Activated CD8-positive, alpha-beta T cell treated with anti-CD3 and anti-CD28 coated beads, Interleukin-2, amount 10 ng/mL, durations not matched to agents 7 days and 5 days (primary cell): ENCODE measurements at regions of chr13 and their contacts with region 1.

Region 1: GRCh38 chr13:59677966-59678814 is 485.5 kb downstream of the DIAPH3 start:
- DNase-seq: peak; percentile 25
- ATAC-seq: peak; percentile 72
- H3K4me3 Mint-ChIP-seq: no peak overlapping the region
- H3K27ac Mint-ChIP-seq: no peak overlapping the region
- H3K4me1 Mint-ChIP-seq: peaks cover under 1% of the 10 kb centered on the region
- H3K27me3 Mint-ChIP-seq: no peaks in the 10 kb centered on the region

Region 2: GRCh38 chr13:59391696-59392095 is 286.5 kb before region 1 on chr13:
- CTCF ChIA-PET with region 1: interaction called, 51 read pairs
- POLR2A ChIA-PET with region 1: no interaction called
- DNase-seq: peak; percentile 80
- ATAC-seq: peak; percentile 96
- H3K4me3 Mint-ChIP-seq: no peak overlapping the region
- H3K27ac Mint-ChIP-seq: no peak overlapping the region
- H3K4me1 Mint-ChIP-seq: no peaks in the 10 kb centered on the region
- H3K27me3 Mint-ChIP-seq: peaks cover 11% of the 10 kb centered on the region

Region 3: DNA sequence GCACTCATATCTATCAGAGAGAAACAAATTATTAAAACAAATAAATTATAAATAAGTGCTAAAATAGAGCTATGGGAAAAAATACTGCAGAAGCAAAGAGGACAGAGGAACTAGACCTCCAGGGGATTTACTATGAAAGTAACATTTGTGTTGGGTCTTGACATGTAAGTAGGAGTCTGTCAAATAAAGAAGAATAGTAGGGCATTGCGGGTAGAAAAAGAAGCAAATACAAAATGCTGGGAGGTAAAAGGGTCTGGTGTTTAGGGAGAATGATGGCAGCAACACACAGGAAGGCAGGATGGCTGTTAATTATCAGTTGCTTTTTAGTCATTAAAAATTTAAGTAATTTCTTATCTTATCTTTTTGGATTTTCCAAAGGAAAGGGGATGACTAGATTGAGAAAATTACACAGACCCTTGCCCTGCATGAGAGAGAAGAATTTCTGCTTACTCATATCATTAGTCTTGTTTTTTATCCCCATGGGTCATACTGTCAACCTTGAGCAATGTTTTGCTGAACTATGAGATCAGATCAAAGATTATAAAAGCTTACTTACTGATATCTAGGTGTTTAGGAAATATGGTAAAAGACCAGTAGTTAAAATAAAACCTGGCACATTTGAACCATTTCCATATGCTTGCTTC is 12.8 kb after region 1 on chr13:
- CTCF ChIA-PET with region 1: interaction called, 10 read pairs
- POLR2A ChIA-PET with region 1: no interaction called
- DNase-seq: no peak
- ATAC-seq: no peak
- H3K4me3 Mint-ChIP-seq: no peak overlapping the region
- H3K27ac Mint-ChIP-seq: no peak overlapping the region
- H3K4me1 Mint-ChIP-seq: no peaks in the 10 kb centered on the region
- H3K27me3 Mint-ChIP-seq: no peaks in the 10 kb centered on the region

Region 4: DNA sequence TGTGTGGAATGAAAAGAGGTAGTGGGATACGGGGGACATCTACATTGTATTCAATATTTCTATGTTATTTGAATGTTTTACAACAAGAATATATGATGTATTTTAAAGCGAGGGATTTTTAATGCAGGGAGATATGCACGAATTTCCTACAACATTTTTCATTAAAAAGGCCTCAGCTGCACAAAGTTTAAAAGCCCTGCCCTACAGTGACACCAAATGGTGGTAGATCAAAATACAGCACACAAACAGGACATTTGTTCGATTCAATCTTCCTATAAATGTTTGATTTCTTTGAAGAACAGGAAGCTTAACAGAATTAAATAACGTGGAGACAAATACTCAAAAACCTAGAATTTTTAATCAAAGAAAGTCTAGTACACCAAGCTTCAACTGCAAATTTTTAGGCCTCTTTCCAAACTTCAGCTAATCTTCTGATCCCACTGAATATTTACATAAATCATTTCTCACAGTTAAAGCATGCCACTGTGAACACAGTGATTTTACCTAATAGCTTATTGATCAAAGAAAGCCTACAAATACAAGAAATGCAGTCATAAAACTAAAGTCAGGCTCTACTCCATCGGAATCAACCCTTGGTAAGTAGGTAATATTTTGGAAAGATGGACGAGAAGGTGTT is 228.3 kb after region 1 on chr13:
- CTCF ChIA-PET with region 1: interaction called, 11 read pairs
- POLR2A ChIA-PET with region 1: no interaction called
- DNase-seq: no peak
- ATAC-seq: no peak
- H3K4me3 Mint-ChIP-seq: no peak overlapping the region
- H3K27ac Mint-ChIP-seq: no peak overlapping the region
- H3K4me1 Mint-ChIP-seq: peaks cover 3% of the 10 kb centered on the region
- H3K27me3 Mint-ChIP-seq: no peaks in the 10 kb centered on the region

Region 5: DNA sequence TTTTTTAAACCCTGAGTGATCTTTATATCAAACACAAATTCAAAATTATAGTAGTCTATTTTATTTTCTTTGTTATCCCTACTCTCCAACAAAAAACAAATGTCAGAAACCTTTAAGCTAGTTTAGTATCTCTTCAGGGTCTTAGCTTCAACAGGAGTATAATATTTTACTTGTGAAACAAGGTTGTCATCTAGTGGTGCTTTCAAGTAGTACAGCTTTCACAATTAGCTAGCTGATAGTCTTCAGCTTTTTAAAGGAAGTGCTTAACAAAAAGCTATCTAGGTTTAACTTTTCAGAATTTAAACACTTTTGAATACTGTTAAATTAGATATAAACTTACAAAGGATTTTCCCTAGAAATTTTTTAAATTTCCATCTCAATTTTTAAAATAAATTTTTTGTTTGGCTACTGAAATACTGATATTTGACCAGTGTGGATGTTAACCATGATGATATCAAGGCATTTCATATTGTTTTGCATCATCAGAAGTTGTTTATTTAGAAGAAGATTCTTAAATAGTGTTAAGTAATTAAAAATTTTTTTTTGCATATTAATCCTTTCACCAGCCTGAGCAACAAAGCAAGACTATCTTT is 753.0 kb after region 1 on chr13:
- CTCF ChIA-PET with region 1: interaction called, 15 read pairs
- POLR2A ChIA-PET with region 1: no interaction called
- DNase-seq: no peak
- ATAC-seq: peak; percentile 73
- H3K4me3 Mint-ChIP-seq: no peak overlapping the region
- H3K27ac Mint-ChIP-seq: no peak overlapping the region
- H3K4me1 Mint-ChIP-seq: peaks cover 16% of the 10 kb centered on the region
- H3K27me3 Mint-ChIP-seq: no peaks in the 10 kb centered on the region